Dorsolateral prefrontal cortex (tissue), 120 donors: ENCODE measurements at regions of chr4 and their contacts with region 1.

Region 1: DNA sequence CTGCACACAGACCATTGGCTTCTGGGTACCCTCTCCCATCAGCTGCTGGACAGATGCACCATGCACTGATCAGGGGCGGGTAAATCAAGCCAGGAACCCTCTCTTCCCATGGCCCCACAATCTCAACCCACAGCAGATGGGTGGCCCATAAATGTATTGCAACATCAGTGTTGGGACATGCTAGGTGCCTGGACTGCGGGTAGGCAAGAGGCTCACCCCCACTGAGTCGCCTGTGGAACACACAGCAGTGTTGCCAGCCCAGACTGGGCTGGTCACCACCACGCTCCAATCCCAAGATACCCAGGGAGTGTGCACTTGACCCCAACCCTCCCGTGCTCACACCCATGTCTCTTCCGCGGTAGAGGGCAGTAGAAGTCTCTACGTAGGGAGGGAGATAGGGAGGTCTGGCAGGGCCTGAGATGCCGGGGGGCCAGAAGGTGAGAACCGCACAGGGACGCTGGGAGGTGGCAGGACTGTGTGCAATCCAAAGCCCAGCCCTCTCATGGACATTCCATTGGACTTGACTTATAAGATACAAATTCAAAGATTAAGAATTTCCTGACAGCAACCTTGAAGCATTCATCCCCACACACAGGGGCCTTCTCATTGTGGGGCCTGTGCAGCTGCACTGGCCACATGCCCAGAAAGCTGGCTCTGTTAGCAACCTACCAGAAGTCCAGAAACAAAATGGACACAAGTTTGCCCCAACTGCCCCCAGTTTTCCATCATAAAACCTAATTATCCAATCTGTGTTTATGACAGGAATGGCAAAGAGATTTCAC is 183.7 kb downstream of the NSUN7 start:
- DNase-seq: peak in 9 of 10 donors; percentile 76 to 87 (median 81)
- H3K4me3 ChIP-seq: no peak overlapping the region
- H3K27ac ChIP-seq: peak overlapping the region; percentile 0 to 95 (median 83)
- H3K27me3 ChIP-seq: no peaks in the 10 kb centered on the region
- CTCF ChIP-seq: peak in 44 of 56 donors; percentile 3 to 54 (median 32)

Region 2: DNA sequence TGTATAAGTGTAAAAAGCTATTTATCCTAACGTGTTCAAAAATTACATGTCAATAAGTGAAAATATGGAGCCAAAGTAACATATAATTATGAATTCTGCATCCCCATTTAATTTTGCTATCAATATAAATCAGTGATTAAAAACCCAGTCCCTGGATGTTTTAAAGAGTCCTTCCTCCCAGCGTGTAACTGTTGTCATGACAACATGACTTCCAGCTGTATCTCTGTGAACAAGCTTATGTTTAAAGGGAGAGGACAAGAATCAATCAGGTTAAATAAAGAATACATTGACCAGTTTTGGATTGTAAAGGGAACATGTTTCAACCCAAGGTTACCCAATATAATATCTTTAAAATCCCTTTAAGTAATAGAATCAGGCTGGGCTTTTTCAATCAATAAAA is 36.0 kb after region 1 on chr4:
- intact Hi-C with region 1: loop called in 1 of 2 experiments (anchors 5 kb)
- DNase-seq: no peak
- H3K4me3 ChIP-seq: no peak overlapping the region
- H3K27ac ChIP-seq: no peak overlapping the region
- H3K27me3 ChIP-seq: no peaks in the 10 kb centered on the region
- CTCF ChIP-seq: no peak

Region 3: GRCh38 chr4:40980318-40980883 is 46.9 kb after region 1 on chr4:
- intact Hi-C with region 1: loop called in 1 of 2 experiments (anchors 5 kb)
- DNase-seq: no peak
- H3K4me3 ChIP-seq: no peak overlapping the region
- H3K27ac ChIP-seq: peak overlapping the region in 6 of 59 donors; percentile 4 to 40 (median 22)
- H3K27me3 ChIP-seq: no peaks in the 10 kb centered on the region
- CTCF ChIP-seq: peak in 51 of 56 donors; percentile 19 to 74 (median 46)

Region 4: DNA sequence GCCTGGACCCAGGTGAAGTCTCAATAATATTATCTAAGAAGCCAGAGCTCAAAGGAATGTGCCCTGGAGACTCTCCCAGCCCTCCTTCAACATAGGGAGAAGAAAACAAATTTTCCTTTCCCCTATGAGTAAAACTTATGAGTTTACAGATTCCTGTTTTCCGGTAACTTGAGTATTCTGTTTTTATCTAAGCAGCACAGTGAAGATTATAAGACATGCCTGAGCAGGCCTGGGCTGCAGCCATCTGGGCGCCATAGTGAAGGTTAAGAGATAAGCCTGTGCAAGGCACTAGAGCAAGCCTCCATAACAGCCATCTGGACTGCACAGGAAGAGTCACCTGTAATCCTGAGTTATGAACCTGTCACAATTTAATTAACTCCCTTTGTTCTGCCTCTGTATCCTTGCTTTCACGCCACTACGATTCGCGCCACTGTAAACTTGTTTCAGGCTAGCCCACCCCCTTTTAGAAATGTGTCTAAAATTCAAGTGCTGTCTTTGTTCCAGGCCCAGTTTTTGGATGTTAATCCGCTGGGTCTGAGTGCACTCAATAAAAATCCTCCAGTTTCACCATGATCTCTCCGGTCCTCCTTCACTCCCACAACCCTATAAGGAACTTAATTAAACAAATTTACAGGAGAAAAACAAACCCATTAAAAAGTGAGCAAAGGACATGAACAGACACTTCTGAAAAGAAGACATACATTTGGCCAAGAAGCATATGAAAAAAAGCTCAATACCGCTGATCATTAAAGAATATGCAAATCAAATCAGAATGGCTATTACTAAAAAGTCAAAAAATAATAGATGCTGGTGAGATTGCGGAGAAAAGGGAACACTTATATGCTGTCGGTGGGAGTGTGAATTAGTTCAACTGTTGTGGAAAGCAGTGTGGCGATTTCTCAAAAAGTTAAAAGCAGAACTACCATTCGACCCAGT is 91.4 kb after region 1 on chr4:
- intact Hi-C with region 1: no loop called
- DNase-seq: no peak
- H3K4me3 ChIP-seq: no peak overlapping the region
- H3K27ac ChIP-seq: no peak overlapping the region
- H3K27me3 ChIP-seq: no peaks in the 10 kb centered on the region
- CTCF ChIP-seq: no peak

Region 5: GRCh38 chr4:41060352-41061334 is 127.2 kb after region 1 on chr4:
- intact Hi-C with region 1: loop called in 1 of 2 experiments (anchors 5 kb)
- DNase-seq: peak in 8 of 10 donors; percentile 38 to 75 (median 54)
- H3K4me3 ChIP-seq: peak overlapping the region in 4 of 59 donors; percentile 7 to 17 (median 13)
- H3K27ac ChIP-seq: peak overlapping the region; percentile 37 to 94 (median 75)
- H3K27me3 ChIP-seq: no peaks in the 10 kb centered on the region
- CTCF ChIP-seq: peak in 12 of 56 donors; percentile 2 to 32 (median 10)

Region 6: GRCh38 chr4:41505161-41505661 is 571.7 kb after region 1 on chr4:
- intact Hi-C with region 1: no loop called
- DNase-seq: peak in 2 of 10 donors; percentile 22 to 52
- H3K4me3 ChIP-seq: peak overlapping the region in 1 of 59 donors; percentile 14
- H3K27ac ChIP-seq: peak overlapping the region in 46 of 59 donors; percentile 4 to 78 (median 51)
- H3K27me3 ChIP-seq: no peaks in the 10 kb centered on the region
- CTCF ChIP-seq: no peak